ENCODE measurements at regions of chr15 and their contacts with region 1.

Region 1: DNA sequence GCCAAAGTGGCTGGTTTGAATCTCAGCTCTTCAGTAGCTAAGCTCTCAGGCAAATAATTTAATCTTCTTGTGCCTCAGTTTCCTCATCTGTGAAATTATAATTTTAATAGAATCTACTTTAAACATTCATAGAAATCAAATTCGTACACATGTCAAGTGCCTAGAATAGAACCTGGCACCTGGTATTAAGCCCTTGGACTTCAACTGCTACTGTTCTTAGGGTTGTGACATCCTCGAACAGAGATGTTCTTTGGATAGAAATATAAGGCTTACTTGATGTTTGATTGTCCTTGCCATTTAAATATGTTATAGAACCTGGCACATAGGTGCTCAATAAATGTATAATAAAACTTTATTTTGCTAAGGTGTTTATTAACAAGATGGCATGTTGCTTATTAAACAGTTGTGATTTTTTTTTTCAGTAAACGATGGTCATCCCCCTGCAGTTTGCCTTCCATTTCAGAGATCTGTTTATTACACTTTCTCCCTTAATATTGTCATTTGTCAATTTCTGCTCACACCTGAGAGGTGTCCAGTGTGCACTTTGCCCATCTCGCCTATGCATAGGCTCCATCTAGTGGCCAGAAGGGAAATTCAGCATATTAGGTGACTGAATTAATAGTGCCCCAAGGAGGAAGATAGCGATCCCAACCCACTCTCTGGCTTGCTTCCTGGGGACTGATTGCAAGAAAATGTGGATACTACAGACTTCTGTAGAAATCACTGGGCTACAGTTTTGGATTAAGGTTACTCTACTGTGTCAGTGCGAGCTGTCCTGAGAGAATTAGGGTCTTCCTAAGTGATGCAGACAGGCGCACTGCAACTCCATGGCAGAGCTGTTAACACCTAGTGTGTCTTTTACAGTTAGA is 10.7 kb downstream of the IGF1R start:
- DNase-seq: peak; percentile 32
- ATAC-seq: peak; percentile 88
- H3K4me3 Mint-ChIP-seq: no peak overlapping the region
- H3K27ac Mint-ChIP-seq: no peak overlapping the region
- H3K4me1 Mint-ChIP-seq: peaks cover 20% of the 10 kb centered on the region
- H3K27me3 Mint-ChIP-seq: no peaks in the 10 kb centered on the region
- CTCF ChIP-seq: peak; percentile 97

Region 2: DNA sequence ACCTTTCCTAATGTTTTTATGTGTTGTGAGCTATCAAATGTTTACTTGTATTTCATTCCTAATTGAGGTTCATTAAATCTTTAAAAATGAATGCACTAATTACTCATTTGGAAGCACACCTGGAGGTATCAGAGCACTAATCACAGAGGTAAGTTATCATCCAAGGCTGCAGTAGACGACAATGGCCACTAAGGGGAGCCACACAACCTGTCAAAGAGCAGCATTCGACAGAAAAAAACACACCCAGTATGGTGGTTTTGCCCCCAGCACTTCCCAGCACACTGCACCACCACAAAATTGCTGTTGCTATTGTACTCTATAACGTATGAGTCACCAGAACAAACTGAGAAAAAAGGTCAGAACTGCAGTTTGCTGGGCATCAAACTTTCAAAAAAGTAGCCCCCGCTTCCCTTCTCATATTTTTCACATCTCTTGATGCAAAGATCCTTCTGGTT is 216.7 kb before region 1 on chr15:
- CTCF ChIA-PET with region 1: interaction called, 4 read pairs
- POLR2A ChIA-PET with region 1: no interaction called
- intact Hi-C with region 1: loop called (anchors 10 kb)
- DNase-seq: peak; percentile 74
- ATAC-seq: peak; percentile 88
- H3K4me3 Mint-ChIP-seq: no peak overlapping the region
- H3K27ac Mint-ChIP-seq: no peak overlapping the region
- H3K4me1 Mint-ChIP-seq: peaks cover 3% of the 10 kb centered on the region
- H3K27me3 Mint-ChIP-seq: no peaks in the 10 kb centered on the region
- CTCF ChIP-seq: peak; percentile 84

Region 3: GRCh38 chr15:98530570-98530969 is 128.5 kb before region 1 on chr15:
- CTCF ChIA-PET with region 1: no interaction called
- POLR2A ChIA-PET with region 1: no interaction called
- intact Hi-C with region 1: no loop called
- DNase-seq: no peak
- ATAC-seq: no peak
- H3K4me3 Mint-ChIP-seq: no peak overlapping the region
- H3K27ac Mint-ChIP-seq: no peak overlapping the region
- H3K4me1 Mint-ChIP-seq: no peaks in the 10 kb centered on the region
- H3K27me3 Mint-ChIP-seq: peaks cover 8% of the 10 kb centered on the region
- CTCF ChIP-seq: no peak

Region 4: DNA sequence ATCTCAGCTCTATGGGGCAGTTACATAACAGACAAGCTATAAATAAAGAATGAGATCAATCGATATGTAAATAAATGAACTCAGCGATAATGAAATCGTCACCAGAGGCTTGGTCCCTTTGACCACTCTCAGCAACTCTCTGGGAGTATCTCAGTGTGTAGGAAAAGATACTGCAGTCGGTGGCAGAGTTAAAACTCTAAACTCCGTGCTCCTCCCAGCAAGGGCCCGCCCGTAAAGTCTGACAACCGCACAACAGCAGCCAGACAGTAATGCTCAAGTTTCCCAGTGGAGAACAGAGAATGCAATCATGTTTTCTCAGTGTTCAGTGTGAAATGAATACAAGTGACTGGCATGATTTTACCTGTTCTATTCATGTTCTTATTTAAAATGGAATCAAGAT is 39.0 kb before region 1 on chr15:
- CTCF ChIA-PET with region 1: no interaction called
- POLR2A ChIA-PET with region 1: no interaction called
- intact Hi-C with region 1: no loop called
- DNase-seq: no peak
- ATAC-seq: no peak
- H3K4me3 Mint-ChIP-seq: no peak overlapping the region
- H3K27ac Mint-ChIP-seq: no peak overlapping the region
- H3K4me1 Mint-ChIP-seq: no peaks in the 10 kb centered on the region
- H3K27me3 Mint-ChIP-seq: peaks cover 18% of the 10 kb centered on the region
- CTCF ChIP-seq: no peak

Region 5: DNA sequence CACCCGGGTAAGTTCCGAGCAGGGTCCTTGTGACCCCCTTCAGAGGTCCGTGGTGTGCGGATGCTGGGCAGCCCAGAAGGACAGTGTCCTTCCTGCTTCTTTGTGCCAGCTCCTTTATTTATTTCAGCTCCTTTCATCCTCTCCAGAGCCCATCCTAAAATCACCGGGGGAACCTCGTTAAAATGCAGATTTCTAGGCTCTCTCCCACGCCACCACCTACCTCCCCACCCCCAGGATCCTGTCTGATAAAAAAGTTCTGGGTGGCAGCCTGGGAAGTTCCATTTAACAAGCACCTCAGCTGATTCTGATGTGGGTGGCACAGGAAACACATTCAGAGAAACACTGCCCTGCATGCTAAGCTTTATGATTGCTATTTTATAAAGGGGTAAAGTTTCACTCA is 23.2 kb before region 1 on chr15:
- CTCF ChIA-PET with region 1: no interaction called
- POLR2A ChIA-PET with region 1: no interaction called
- intact Hi-C with region 1: no loop called
- DNase-seq: peak; percentile 24
- ATAC-seq: no peak
- H3K4me3 Mint-ChIP-seq: no peak overlapping the region
- H3K27ac Mint-ChIP-seq: no peak overlapping the region
- H3K4me1 Mint-ChIP-seq: peaks cover 9% of the 10 kb centered on the region
- H3K27me3 Mint-ChIP-seq: peaks cover 1% of the 10 kb centered on the region
- CTCF ChIP-seq: no peak

Region 6: GRCh38 chr15:98647774-98648653 is 11.1 kb before region 1 on chr15 and contains the start of gene IGF1R:
- CTCF ChIA-PET with region 1: interaction called, 24 read pairs
- POLR2A ChIA-PET with region 1: no interaction called
- intact Hi-C with region 1: no loop called
- DNase-seq: peak; percentile 83
- ATAC-seq: peak; percentile 74
- H3K4me3 Mint-ChIP-seq: peak within 1 kb of the TSS; percentile 93
- H3K27ac Mint-ChIP-seq: peak within 1 kb of the TSS; percentile 90
- H3K4me1 Mint-ChIP-seq: peaks cover 23% of the 10 kb centered on the region
- H3K27me3 Mint-ChIP-seq: peaks cover 15% of the 10 kb centered on the region
- CTCF ChIP-seq: no peak
- total RNA-seq, gene IGF1R: 22.8 to 24.7 TPM

Region 7: GRCh38 chr15:98779463-98780071 is 120.5 kb after region 1 on chr15:
- CTCF ChIA-PET with region 1: interaction called, 11 read pairs
- POLR2A ChIA-PET with region 1: no interaction called
- intact Hi-C with region 1: no loop called
- DNase-seq: peak; percentile 84
- ATAC-seq: peak; percentile 84
- H3K4me3 Mint-ChIP-seq: peak overlapping the region; percentile 20
- H3K27ac Mint-ChIP-seq: no peak overlapping the region
- H3K4me1 Mint-ChIP-seq: peaks cover 37% of the 10 kb centered on the region
- H3K27me3 Mint-ChIP-seq: no peaks in the 10 kb centered on the region
- CTCF ChIP-seq: peak; percentile 94

Region 8: GRCh38 chr15:98966091-98966787 is 307.2 kb after region 1 on chr15:
- CTCF ChIA-PET with region 1: no interaction called
- POLR2A ChIA-PET with region 1: no interaction called
- intact Hi-C with region 1: no loop called
- DNase-seq: no peak
- ATAC-seq: no peak
- H3K4me3 Mint-ChIP-seq: no peak overlapping the region
- H3K27ac Mint-ChIP-seq: no peak overlapping the region
- H3K4me1 Mint-ChIP-seq: no peaks in the 10 kb centered on the region
- H3K27me3 Mint-ChIP-seq: no peaks in the 10 kb centered on the region
- CTCF ChIP-seq: no peak